ENCODE measurements at regions of chr19 and their contacts with region 1.

Region 1: GRCh38 chr19:39532233-39533002 is at the start of gene EID2B:
- DNase-seq: peak; percentile 76 to 97
- H3K4me3 ChIP-seq: peak within 1 kb of the TSS; percentile 86 to 91
- H3K27ac ChIP-seq: peak within 1 kb of the TSS; percentile 74 to 84
- H3K4me1 ChIP-seq: peaks cover 6 to 11% of the 10 kb centered on the region in 2 donors
- H3K27me3 ChIP-seq: no peaks in the 10 kb centered on the region
- CTCF ChIP-seq: peak; percentile 96 to 99 (median 97)
- total RNA-seq, gene EID2B: not detected

Region 2: GRCh38 chr19:39390755-39391592 is 141.4 kb before region 1 on chr19 and contains the starts of genes MED29 and PAF1:
- intact Hi-C with region 1: loop called (anchors 2 kb)
- DNase-seq: peak; percentile 94 to 99
- H3K4me3 ChIP-seq: peak within 1 kb of the TSS; percentile 78 to 93
- H3K27ac ChIP-seq: peak within 1 kb of the TSS; percentile 98 to 100
- H3K4me1 ChIP-seq: peaks cover 8 to 21% of the 10 kb centered on the region in 2 donors
- H3K27me3 ChIP-seq: no peaks in the 10 kb centered on the region
- CTCF ChIP-seq: peak in 1 of 3 experiments; percentile 8
- total RNA-seq, gene MED29: 60.8 TPM
- total RNA-seq, gene PAF1: 12.7 TPM

Region 3: GRCh38 chr19:39397360-39398296 is 134.8 kb before region 1 on chr19:
- intact Hi-C with region 1: loop called (anchors 1 kb)
- DNase-seq: peak; percentile 50 to 95
- H3K4me3 ChIP-seq: no peak overlapping the region
- H3K27ac ChIP-seq: peak overlapping the region; percentile 80 to 82
- H3K4me1 ChIP-seq: peaks cover 4 to 15% of the 10 kb centered on the region in 2 donors
- H3K27me3 ChIP-seq: no peaks in the 10 kb centered on the region
- CTCF ChIP-seq: peak; percentile 96 to 97 (median 97)

Region 4: DNA sequence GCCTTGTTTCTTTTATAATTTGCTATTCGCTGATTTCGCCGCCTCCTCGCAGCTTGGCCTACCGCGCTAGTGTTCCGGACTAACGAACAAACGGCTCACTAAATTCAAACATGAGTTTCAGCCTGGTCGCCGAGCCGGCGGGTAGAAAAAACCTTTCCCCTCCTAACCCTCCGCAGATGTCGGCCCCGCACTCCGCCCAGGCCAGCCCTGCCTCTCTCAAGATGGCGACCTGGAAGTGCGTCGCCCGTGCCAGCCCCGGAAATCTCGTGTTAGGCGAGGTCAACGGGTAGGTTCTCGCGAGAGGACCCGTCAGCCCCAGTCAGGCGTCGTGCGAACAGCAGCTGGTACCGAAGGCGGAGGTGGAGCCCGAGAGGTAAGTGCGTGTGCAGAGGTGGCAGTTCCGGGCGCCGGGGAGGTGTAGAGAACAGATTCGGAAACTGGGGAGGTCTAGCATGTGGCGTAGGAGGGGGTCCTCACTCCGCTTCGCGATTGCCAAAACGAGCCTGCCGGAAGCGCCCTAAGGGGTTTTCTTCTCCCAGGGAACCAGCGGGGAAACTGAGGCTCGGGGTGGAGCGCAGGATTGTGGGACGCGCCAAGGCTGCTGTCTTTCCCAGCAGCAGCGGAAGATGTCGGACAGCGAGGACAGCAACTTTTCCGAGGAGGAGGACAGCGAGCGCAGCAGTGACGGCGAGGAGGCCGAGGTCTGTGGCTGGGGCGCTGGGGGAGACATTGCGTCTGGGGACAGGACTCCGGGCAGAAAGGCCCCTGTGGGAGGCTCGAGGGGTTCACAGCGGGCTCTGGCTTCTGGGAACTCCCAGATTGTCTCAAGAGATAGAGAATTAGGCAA is 86.9 kb before region 1 on chr19 and contains the start of gene SUPT5H:
- intact Hi-C with region 1: loop called (anchors 1 kb)
- DNase-seq: peak; percentile 88 to 99
- H3K4me3 ChIP-seq: peak within 1 kb of the TSS; percentile 86 to 92
- H3K27ac ChIP-seq: peak within 1 kb of the TSS; percentile 91 to 96
- H3K4me1 ChIP-seq: peaks cover 13 to 32% of the 10 kb centered on the region in 2 donors
- H3K27me3 ChIP-seq: no peaks in the 10 kb centered on the region
- CTCF ChIP-seq: no peak
- total RNA-seq, gene SUPT5H: 142 TPM

Region 5: GRCh38 chr19:39474139-39474622 is 58.2 kb before region 1 on chr19:
- intact Hi-C with region 1: loop called (anchors 1 kb)
- DNase-seq: peak in 1 of 2 donors; percentile 73
- H3K4me3 ChIP-seq: no peak overlapping the region
- H3K27ac ChIP-seq: no peak overlapping the region
- H3K4me1 ChIP-seq: no peaks in the 10 kb centered on the region
- H3K27me3 ChIP-seq: no peaks in the 10 kb centered on the region
- CTCF ChIP-seq: peak; percentile 29 to 86 (median 79)

Region 6: GRCh38 chr19:39480337-39481228 is 51.8 kb before region 1 on chr19 and contains the start of gene TIMM50:
- intact Hi-C with region 1: loop called (anchors 1 kb)
- DNase-seq: peak; percentile 79 to 98
- H3K4me3 ChIP-seq: peak within 1 kb of the TSS; percentile 68 to 83
- H3K27ac ChIP-seq: peak within 1 kb of the TSS; percentile 38 to 82
- H3K4me1 ChIP-seq: peaks cover 4 to 12% of the 10 kb centered on the region in 2 donors
- H3K27me3 ChIP-seq: no peaks in the 10 kb centered on the region
- CTCF ChIP-seq: no peak
- total RNA-seq, gene TIMM50: 92.0 TPM

Region 7: DNA sequence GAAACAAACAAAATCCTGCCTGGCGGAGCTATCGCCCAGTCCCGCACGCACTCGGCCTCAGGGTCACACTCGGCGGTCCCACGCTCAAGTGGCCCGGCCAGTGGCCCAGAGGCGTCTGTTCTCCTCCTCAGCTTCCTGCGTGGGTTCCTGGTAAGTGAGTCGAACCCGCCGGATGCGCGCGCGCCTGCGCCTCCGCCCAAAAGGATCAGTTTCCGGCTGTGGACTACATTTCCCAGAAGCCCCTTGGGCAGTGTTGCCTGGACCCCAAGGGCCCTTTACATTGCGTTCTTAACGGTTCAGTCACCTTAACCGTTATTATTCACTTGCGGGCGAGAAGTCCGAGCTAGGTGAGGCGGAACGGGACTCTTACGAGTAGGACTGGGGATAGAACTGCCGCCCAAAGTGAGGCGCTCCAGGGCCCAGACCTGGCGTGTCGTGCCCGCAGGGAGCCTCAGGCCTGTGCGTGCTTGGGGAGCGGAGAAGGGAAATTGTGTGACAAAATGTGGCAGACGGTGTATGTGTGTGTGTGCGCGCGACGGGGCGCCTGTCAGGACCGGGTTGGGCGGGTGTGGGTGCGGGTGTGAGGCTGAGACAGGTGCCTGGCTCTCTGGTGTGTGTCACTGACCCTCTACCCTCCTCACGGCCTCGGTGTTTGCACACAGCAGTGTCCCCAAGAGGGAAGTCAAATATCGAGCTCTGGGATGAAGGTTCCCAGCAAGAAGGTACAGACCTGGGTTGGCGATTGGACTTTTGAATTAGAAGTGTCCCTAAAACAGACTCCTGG is 464.6 kb after region 1 on chr19 and contains the start of gene ZNF546:
- intact Hi-C with region 1: loop called (anchors 10 kb)
- DNase-seq: peak; percentile 70 to 97
- H3K4me3 ChIP-seq: peak within 1 kb of the TSS; percentile 69 to 72
- H3K27ac ChIP-seq: peak within 1 kb of the TSS; percentile 91 to 92
- H3K4me1 ChIP-seq: peaks cover 0 to 10% of the 10 kb centered on the region in 2 donors
- H3K27me3 ChIP-seq: no peaks in the 10 kb centered on the region
- CTCF ChIP-seq: no peak
- total RNA-seq, gene ZNF546: 3.0 TPM

Region 8: GRCh38 chr19:40178756-40179155 is 646.3 kb after region 1 on chr19:
- intact Hi-C with region 1: no loop called
- DNase-seq: no peak
- H3K4me3 ChIP-seq: no peak overlapping the region
- H3K27ac ChIP-seq: no peak overlapping the region
- H3K4me1 ChIP-seq: no peaks in the 10 kb centered on the region
- H3K27me3 ChIP-seq: no peaks in the 10 kb centered on the region
- CTCF ChIP-seq: no peak